ENCODE measurements at regions of chr10 and their contacts with region 1.

Region 1: GRCh38 chr10:104328896-104329710 is 9.2 kb downstream of the ITPRIP start:
- DNase-seq: peak; percentile 99
- H3K4me3 ChIP-seq: peak overlapping the region in 2 of 3 experiments; percentile 24 to 35
- H3K27ac ChIP-seq: peak overlapping the region; percentile 98
- H3K4me1 ChIP-seq: peaks cover 77% of the 10 kb centered on the region
- H3K27me3 ChIP-seq: no peaks in the 10 kb centered on the region
- CTCF ChIP-seq: no peak

Region 2: GRCh38 chr10:104268716-104269645 is 60.1 kb before region 1 on chr10 and contains the start of gene GSTO2:
- CTCF ChIA-PET with region 1: no interaction called
- dilution Hi-C with region 1: no loop called
- in situ Hi-C with region 1: no loop called
- intact Hi-C with region 1: loop called (anchors 2 kb)
- DNase-seq: peak; percentile 99
- H3K4me3 ChIP-seq: peak within 1 kb of the TSS; percentile 77 to 91 (median 78)
- H3K27ac ChIP-seq: peak within 1 kb of the TSS; percentile 77
- H3K4me1 ChIP-seq: peaks cover 6% of the 10 kb centered on the region
- H3K27me3 ChIP-seq: no peaks in the 10 kb centered on the region
- CTCF ChIP-seq: no peak
- total RNA-seq, gene GSTO2: 16.2 to 26.8 TPM

Region 3: DNA sequence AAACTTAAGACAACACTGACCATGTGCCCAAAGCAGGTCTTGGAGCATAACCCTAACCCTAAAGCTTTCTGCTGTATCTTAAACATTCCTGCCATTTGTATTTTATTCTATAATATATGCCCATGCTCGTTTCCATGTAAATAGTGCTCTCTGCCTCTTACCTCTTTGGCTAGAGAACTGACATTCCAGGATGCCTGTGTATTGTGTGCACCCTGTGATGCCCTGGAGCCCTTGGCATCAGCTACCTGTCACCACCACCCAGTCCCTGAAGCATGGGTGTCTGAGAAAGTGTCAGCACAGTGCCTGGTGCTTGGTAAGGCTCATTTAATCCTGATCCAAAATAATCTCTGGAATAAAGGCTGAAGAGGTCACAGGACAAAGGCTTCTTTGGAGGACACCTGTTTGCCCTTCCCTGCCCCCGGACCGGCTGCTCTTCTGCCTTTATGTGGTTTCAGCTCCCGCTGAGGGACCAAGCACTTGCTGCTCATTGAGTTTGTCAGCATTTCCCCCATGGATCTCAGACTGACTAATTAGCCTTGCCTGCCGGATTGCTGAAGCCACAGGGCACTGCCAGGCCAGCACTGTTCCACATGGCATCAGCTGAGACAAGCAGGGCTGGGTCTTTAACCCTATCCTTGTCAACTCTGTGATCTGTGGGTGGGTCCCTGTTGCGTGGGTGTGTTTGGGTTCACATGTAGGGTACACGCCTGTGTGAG is 172.9 kb after region 1 on chr10:
- CTCF ChIA-PET with region 1: no interaction called
- dilution Hi-C with region 1: no loop called
- in situ Hi-C with region 1: no loop called
- intact Hi-C with region 1: no loop called
- DNase-seq: no peak
- H3K4me3 ChIP-seq: no peak overlapping the region
- H3K27ac ChIP-seq: no peak overlapping the region
- H3K4me1 ChIP-seq: no peaks in the 10 kb centered on the region
- H3K27me3 ChIP-seq: peaks cover 2% of the 10 kb centered on the region
- CTCF ChIP-seq: no peak

Region 4: GRCh38 chr10:104580774-104581675 is 251.9 kb after region 1 on chr10:
- CTCF ChIA-PET with region 1: no interaction called
- dilution Hi-C with region 1: no loop called
- in situ Hi-C with region 1: no loop called
- intact Hi-C with region 1: no loop called
- DNase-seq: peak; percentile 57
- H3K4me3 ChIP-seq: no peak overlapping the region
- H3K27ac ChIP-seq: no peak overlapping the region
- H3K4me1 ChIP-seq: peaks cover 20% of the 10 kb centered on the region
- H3K27me3 ChIP-seq: no peaks in the 10 kb centered on the region
- CTCF ChIP-seq: peak; percentile 85 to 89

Measured in mammary epithelial cell (primary cell).